ENCODE measurements at regions of chr2 and their contacts with region 1.

Region 1: GRCh38 chr2:120343433-120344105 is 2.4 kb upstream of the INHBB start:
- DNase-seq: peak; percentile 95

Region 2: DNA sequence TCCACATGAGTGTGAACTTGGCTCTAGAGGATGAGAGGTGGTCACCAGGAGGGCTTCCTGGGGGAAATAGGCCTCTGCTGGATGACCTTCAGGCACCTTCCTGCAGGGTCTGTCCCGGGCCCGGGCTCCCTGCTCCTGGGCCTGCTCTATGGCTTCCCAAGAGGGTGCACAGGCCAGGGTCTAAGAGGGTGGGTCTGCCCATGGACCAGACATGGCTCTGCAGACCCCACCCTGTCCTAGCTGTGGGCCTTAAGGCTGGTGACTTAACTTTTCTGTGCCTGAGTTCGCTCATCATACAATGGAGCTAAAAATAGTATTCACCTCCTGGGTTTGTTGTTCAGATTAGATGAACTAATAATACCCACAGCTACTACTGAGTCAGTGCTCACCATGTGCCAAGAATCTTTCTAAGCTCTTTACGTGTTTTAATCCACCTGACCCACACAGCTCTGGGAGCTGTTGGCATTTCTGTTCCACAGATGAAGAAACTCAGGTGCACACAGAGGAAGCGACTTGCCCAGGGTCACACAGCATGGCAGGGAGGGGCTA is 16.8 kb after region 1 on chr2:
- intact Hi-C with region 1: no loop called
- DNase-seq: no peak

Region 3: DNA sequence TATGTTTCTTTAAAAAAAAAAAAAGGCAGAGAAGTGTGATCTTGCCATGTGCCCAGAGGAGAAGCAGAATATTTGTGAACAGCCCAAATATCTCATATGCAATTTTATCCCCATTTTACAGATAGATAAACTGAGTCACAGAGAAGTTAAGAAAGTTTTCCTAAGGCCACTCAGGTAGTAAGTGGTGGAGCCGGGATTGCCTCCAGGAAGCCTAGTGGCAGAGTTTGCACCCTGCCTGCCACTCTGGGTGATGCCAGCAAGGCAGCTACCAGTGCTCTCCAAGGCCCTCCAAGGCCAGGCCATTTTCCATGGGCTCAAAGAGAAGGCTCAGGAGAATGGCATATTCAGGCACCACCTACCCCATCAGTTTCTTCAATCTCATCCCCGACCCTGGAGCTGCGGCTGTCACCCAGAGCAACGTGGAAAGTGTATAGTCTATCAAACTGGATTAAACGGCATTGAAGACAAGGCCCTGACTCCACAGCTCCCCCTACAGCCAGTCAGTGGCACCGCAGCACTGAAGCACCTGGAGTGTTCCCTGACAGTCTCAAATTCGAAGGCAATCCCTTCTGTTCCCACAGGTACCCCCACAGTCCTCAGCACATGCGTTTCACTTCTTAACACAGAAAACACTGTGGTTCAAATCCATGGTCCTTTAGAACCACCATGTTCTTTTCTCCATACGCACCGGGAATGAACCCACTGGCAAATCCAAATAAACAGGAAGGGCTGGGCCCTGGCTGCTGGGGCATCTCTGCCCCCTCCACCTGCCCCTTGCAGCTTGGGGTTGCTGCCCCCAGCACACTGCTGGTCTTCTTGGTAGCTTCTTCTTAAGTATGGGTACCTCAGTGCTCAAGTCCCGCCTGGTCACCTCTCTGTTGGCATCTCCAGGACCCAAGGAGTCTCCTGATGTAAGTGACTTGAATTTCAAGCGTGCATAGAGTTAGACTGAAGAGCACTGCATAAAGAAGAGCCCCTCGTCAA is 177.7 kb after region 1 on chr2:
- intact Hi-C with region 1: no loop called
- DNase-seq: peak; percentile 80

Region 4: GRCh38 chr2:120539937-120540718 is 196.6 kb after region 1 on chr2:
- intact Hi-C with region 1: loop called in 1 of 2 experiments (anchors 10 kb)
- DNase-seq: peak; percentile 91

Region 5: GRCh38 chr2:120552800-120553481 is 209.4 kb after region 1 on chr2:
- intact Hi-C with region 1: loop called (anchors 10 kb)
- DNase-seq: peak; percentile 91

Region 6: GRCh38 chr2:120670771-120671480 is 327.4 kb after region 1 on chr2:
- intact Hi-C with region 1: loop called (anchors 5 kb)
- DNase-seq: no peak

Region 7: GRCh38 chr2:120680136-120680761 is 336.7 kb after region 1 on chr2:
- intact Hi-C with region 1: loop called (anchors 1 to 5 kb)
- DNase-seq: peak; percentile 93

Region 8: DNA sequence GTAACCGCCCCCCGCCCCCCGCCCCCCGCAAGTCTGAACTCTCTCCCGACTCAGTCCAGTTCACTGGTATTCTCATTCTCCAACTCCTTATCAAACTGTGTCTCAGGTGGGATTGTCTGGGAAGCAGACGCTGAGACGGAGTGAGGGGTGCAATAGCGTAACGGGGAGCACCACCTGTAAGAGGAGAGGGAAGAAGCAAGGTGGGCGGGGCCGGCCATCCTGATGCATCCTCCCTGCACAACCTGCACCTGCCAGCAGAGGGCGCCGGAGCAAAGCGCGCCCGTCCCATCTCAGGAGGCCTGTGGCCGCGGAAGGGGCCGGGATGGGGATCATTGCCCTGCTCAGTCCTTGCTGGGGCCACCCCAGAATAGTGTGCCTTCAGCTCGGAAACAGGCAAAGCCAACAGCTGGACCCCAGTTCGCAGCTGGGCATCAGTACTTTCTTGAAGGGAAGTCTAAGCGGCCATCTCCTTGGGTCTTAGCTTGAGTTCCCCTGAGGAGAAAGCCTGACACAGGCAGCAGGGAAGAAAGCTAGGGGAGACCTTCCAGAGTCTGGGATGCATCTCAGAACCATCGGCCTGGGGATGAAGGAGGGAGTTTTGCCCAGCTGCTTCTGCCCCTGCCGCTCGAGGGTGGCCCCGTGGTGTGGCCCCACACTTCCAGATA is 733.4 kb after region 1 on chr2:
- intact Hi-C with region 1: loop called (anchors 10 kb)
- DNase-seq: peak; percentile 90

Measured in posterior vena cava (tissue), 2 donors.